ENCODE measurements at regions of chr7 and their contacts with region 1.

Region 1: GRCh38 chr7:124784879-124785818 is 19.6 kb upstream of the GPR37 start:
- DNase-seq: no peak
- ATAC-seq: peak; percentile 88

Region 2: DNA sequence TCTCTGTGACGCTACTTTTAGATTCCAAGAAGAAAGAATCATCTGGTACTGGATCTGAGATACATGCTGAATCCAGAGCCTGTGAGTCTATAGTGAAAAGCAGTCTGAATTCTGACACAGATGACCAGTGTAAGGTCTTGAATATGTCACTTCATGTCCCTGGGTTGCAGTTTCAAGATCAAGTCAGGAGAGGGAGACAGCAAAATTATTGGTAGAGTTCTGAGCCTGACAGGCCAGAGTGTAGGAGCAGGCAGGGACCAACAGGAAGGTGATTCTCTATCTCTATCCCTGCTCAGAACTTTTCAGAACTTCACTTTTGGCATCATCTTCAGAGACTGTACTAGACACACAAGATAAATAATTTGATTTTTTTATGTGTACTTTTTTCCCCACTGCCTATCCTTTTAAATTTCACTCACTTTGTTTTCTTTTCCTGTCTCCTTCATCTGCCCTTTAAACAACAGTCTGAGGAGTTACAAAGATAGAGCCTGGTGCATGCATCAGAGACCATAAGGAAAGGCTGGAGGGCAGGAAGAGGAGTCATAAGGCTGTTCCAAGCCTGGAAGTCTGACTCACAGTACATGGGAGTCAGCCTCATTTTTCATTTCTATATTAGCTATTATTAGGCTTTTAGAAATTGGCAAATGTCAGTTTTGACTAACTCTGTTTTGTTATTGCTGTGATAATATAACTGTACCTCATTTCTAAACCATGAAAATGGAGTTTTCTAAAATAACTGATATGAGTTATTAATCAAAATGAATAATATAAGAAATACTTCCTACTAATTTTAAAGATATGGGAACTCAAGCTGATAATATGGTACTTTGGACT is 632.1 kb before region 1 on chr7:
- intact Hi-C with region 1: loop called (anchors 5 kb)
- DNase-seq: no peak
- ATAC-seq: peak; percentile 29

Region 3: DNA sequence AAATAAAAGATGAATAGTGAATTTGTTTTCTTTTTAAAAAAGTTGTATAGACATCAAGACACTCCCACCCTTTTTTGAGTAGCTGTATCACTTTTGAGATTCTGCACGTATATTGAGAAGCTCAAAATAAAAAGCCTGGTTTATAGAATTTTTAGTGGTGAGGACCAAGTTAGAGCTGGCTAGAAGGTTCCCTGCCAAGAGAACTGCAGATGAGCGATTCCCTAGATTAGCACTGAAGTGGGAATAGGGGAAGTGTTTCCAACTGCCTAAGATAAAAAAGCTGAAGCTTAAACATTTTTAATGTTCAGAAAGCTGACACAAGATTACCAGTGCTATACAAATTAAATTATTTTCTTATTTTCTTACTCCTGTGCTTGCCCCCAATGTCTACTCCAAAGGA is 616.5 kb before region 1 on chr7:
- intact Hi-C with region 1: loop called (anchors 5 kb)
- DNase-seq: no peak
- ATAC-seq: no peak

Region 4: DNA sequence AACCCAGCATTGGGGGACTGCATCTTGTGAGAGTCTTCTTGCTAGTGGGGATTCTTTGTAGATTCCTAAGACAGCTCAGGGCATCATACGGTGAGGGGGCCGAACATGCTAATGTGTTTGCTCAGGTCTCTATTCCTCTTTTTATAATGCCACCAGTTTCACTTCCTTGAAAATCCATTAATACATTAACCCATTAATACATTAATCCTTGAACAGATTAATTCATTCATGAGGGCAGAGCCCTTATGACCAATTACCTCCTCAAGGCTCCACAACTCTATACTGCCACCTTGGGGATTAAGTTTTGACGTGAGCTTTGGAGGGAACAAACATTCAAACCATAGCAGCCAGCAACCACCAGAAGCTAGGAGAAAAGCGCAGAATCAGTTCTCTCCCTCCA is 211.6 kb after region 1 on chr7:
- intact Hi-C with region 1: no loop called
- DNase-seq: no peak
- ATAC-seq: no peak